IMR-90 (cell line): ENCODE measurements at regions of chr3 and their contacts with region 1.

Region 1: GRCh38 chr3:107522510-107523288 is at the start of gene BBX:
- DNase-seq: peak; percentile 97
- ATAC-seq: peak; percentile 88
- H3K4me3 ChIP-seq: peak within 1 kb of the TSS; percentile 87
- H3K27ac ChIP-seq: peak within 1 kb of the TSS; percentile 91
- H3K4me1 ChIP-seq: no peaks in the 10 kb centered on the region
- H3K27me3 ChIP-seq: no peaks in the 10 kb centered on the region; the same call in 1 of the 2 replicates
- CTCF ChIP-seq: no peak
- POLR2A ChIP-seq: no peak
- RAD21 ChIP-seq: no peak
- total RNA-seq, gene BBX: 87.5 and 107 TPM in 2 replicates

Region 2: GRCh38 chr3:107346564-107346963 is 176.1 kb before region 1 on chr3:
- CTCF ChIA-PET with region 1: no interaction called
- POLR2A ChIA-PET with region 1: no interaction called
- dilution Hi-C with region 1: no loop called
- in situ Hi-C with region 1: no loop called
- intact Hi-C with region 1: no loop called
- DNase-seq: no peak
- ATAC-seq: no peak
- H3K4me3 ChIP-seq: no peak overlapping the region
- H3K27ac ChIP-seq: no peak overlapping the region
- H3K4me1 ChIP-seq: no peaks in the 10 kb centered on the region
- H3K27me3 ChIP-seq: no peaks in the 10 kb centered on the region
- CTCF ChIP-seq: no peak
- POLR2A ChIP-seq: no peak
- RAD21 ChIP-seq: no peak

Region 3: GRCh38 chr3:107429320-107430181 is 93.1 kb before region 1 on chr3:
- CTCF ChIA-PET with region 1: no interaction called
- POLR2A ChIA-PET with region 1: no interaction called
- dilution Hi-C with region 1: no loop called
- in situ Hi-C with region 1: no loop called
- intact Hi-C with region 1: loop called (anchors 1 kb)
- DNase-seq: peak; percentile 87
- ATAC-seq: peak; percentile 83
- H3K4me3 ChIP-seq: peak overlapping the region; percentile 43
- H3K27ac ChIP-seq: no peak overlapping the region
- H3K4me1 ChIP-seq: peaks cover 2% of the 10 kb centered on the region; the same call in 1 of the 2 replicates
- H3K27me3 ChIP-seq: no peaks in the 10 kb centered on the region
- CTCF ChIP-seq: peak; percentile 93
- POLR2A ChIP-seq: no peak
- RAD21 ChIP-seq: peak; percentile 80

Region 4: GRCh38 chr3:107493134-107493533 is 29.6 kb before region 1 on chr3:
- CTCF ChIA-PET with region 1: no interaction called
- POLR2A ChIA-PET with region 1: no interaction called
- dilution Hi-C with region 1: no loop called
- in situ Hi-C with region 1: no loop called
- intact Hi-C with region 1: loop called (anchors 2 kb)
- DNase-seq: no peak
- ATAC-seq: no peak
- H3K4me3 ChIP-seq: no peak overlapping the region
- H3K27ac ChIP-seq: no peak overlapping the region
- H3K4me1 ChIP-seq: no peaks in the 10 kb centered on the region
- H3K27me3 ChIP-seq: no peaks in the 10 kb centered on the region
- CTCF ChIP-seq: no peak
- POLR2A ChIP-seq: no peak
- RAD21 ChIP-seq: no peak

Region 5: DNA sequence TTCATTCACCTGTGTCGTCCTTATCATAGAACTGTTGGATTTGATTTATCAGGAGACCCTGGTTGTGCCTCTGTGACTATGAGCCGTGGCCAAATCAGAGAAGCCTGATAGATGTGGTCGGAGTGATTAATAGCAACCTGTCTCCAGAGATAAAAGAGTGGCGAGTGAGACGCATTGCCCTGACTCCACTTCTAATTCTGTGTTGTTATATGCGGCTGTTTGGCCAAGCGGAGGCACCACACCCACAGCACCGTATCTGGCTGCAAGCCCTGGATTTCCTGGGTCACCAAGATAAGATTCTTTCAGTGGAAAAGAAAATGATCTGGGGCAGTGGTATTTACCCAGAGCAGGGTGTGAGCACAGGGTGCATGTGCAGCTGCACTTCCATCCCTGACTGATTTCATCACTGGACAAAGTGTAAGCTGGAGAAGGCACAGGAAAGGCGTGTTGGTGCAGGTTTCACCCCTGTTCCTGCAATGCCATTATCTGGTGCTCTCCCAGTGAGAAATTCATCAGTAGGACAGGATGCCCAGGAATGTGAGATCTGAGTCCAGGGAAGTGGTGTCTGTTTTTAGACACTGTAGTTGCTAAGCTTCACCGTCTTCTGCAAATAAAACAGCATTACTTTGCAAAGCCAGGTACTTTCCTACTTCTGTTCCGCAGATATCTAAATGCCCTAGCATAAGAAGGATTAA is 483.5 kb after region 1 on chr3:
- CTCF ChIA-PET with region 1: no interaction called
- POLR2A ChIA-PET with region 1: no interaction called
- dilution Hi-C with region 1: no loop called
- in situ Hi-C with region 1: no loop called
- intact Hi-C with region 1: no loop called
- DNase-seq: no peak
- ATAC-seq: peak; percentile 24
- H3K4me3 ChIP-seq: no peak overlapping the region
- H3K27ac ChIP-seq: no peak overlapping the region
- H3K4me1 ChIP-seq: no peaks in the 10 kb centered on the region
- H3K27me3 ChIP-seq: peaks cover 12% of the 10 kb centered on the region
- CTCF ChIP-seq: no peak
- POLR2A ChIP-seq: no peak
- RAD21 ChIP-seq: no peak